ENCODE measurements at regions of chr6 and their contacts with region 1.

Region 1: GRCh38 chr6:4313044-4313686 is 177.8 kb upstream of the ECI2 start:
- DNase-seq: peak in 1 of 2 donors; percentile 83
- ATAC-seq: peak; percentile 83
- H3K4me3 ChIP-seq: no peak overlapping the region
- H3K27ac ChIP-seq: peak overlapping the region in 1 of 2 donors; percentile 50
- H3K4me1 ChIP-seq: no peaks in the 10 kb centered on the region
- H3K27me3 ChIP-seq: no peaks in the 10 kb centered on the region

Region 2: GRCh38 chr6:4351520-4352315 is 38.6 kb after region 1 on chr6:
- intact Hi-C with region 1: loop called in 1 of 2 experiments (anchors 2 kb)
- DNase-seq: peak; percentile 89 to 93
- ATAC-seq: peak; percentile 73
- H3K4me3 ChIP-seq: no peak overlapping the region
- H3K27ac ChIP-seq: peak overlapping the region in 1 of 2 donors; percentile 80
- H3K4me1 ChIP-seq: peaks cover 0 to 5% of the 10 kb centered on the region in 2 donors
- H3K27me3 ChIP-seq: no peaks in the 10 kb centered on the region

Region 3: DNA sequence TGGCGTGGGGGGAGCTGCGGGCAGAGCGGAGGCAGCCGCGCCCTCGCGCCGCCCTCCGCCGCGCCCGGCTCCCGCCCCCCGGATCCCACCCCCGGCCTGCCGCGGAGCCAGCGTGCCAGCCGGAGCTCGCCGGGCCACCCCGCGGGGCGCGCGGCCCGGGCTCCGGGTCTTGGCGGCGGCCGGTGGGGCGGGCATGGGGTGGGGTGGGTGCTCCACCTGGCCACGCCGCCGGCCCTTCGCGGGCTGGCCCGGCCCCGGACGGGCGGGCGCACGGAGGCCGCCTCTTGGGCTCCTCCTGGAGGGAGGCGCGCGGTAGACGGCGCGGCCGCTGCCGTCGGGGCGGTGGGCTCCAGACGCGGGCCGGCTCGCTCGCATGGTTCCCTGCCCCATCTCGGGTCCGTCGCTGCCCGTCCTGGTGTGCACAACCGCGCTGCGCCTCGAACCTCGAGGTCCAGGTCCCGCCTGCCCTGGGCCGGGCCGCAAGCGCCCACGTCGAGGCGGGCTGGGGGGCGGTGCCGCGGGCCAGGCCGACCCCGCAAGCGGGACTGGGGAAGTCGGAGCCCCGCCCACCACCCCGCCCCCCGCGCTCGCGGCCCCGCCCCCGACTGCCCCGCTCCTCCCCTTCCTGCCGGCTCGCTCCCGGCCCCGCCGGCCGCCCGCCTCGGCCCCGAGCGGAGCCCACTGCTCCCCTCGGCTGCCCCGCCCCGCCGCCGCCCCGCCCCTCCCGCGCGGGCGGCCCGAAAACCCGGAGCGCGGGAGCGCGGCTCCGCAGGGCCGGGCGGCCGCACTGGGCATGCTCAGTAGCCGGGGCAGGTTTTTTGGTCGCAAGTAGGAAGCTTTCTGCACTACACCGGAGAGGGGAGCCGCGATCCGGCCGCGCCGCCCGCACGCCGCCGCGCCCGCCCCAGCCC is 462.7 kb after region 1 on chr6 and contains the start of gene CDYL:
- intact Hi-C with region 1: loop called in 1 of 2 experiments (anchors 10 kb)
- DNase-seq: peak; percentile 92 to 95
- ATAC-seq: peak; percentile 93
- H3K4me3 ChIP-seq: peak within 1 kb of the TSS; percentile 91 to 99
- H3K27ac ChIP-seq: peak within 1 kb of the TSS; percentile 3 to 96
- H3K4me1 ChIP-seq: peaks cover 4 to 5% of the 10 kb centered on the region in 2 donors
- H3K27me3 ChIP-seq: no peaks in the 10 kb centered on the region
- total RNA-seq, gene CDYL: 42.9 to 44.2 TPM

Region 4: DNA sequence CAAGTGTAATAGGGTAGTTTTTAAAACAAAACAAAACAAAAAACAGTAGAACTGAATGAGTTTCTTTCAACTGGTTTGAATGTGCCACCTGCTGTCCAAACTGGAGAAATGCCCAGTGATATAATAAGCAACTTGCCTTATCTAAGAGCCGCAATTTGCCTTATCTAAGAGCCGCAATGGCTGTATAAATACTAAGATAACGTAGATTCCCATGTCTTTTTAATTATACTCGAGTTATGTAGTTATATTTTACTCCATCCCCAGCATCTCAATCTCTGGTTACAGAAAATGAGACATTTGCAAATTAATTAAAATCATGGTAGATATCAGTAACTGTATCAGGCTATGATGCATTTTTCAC is 623.5 kb after region 1 on chr6:
- intact Hi-C with region 1: loop called (anchors 5 to 10 kb)
- DNase-seq: no peak
- ATAC-seq: no peak
- H3K4me3 ChIP-seq: no peak overlapping the region
- H3K27ac ChIP-seq: no peak overlapping the region
- H3K4me1 ChIP-seq: no peaks in the 10 kb centered on the region
- H3K27me3 ChIP-seq: no peaks in the 10 kb centered on the region

Region 5: GRCh38 chr6:5025911-5026819 is 713.0 kb after region 1 on chr6:
- intact Hi-C with region 1: loop called in 1 of 2 experiments (anchors 5 kb)
- DNase-seq: peak; percentile 77 to 87
- ATAC-seq: peak; percentile 87
- H3K4me3 ChIP-seq: peak overlapping the region; percentile 48 to 96
- H3K27ac ChIP-seq: peak overlapping the region in 1 of 2 donors; percentile 69
- H3K4me1 ChIP-seq: no peaks in the 10 kb centered on the region
- H3K27me3 ChIP-seq: no peaks in the 10 kb centered on the region

Measured in aorta (tissue), 5 donors.